ENCODE measurements at regions of chr12 and their contacts with region 1.

Region 1: GRCh38 chr12:123468562-123469185 is 10.7 kb downstream of the SNRNP35 start:
- DNase-seq: peak; percentile 63
- H3K4me3 ChIP-seq: no peak overlapping the region
- H3K27ac ChIP-seq: no peak overlapping the region
- H3K4me1 ChIP-seq: peaks cover 12% of the 10 kb centered on the region
- CTCF ChIP-seq: peak; percentile 75

Region 2: GRCh38 chr12:123271001-123271729 is 197.5 kb before region 1 on chr12:
- CTCF ChIA-PET with region 1: no interaction called
- POLR2A ChIA-PET with region 1: no interaction called
- intact Hi-C with region 1: loop called (anchors 2 kb)
- DNase-seq: peak; percentile 83
- H3K4me3 ChIP-seq: peak overlapping the region; percentile 77
- H3K27ac ChIP-seq: no peak overlapping the region
- H3K4me1 ChIP-seq: peaks cover 21% of the 10 kb centered on the region
- CTCF ChIP-seq: no peak; the same call in 1 of the 2 replicates